ENCODE measurements at regions of chr7 and their contacts with region 1.

Region 1: GRCh38 chr7:65269150-65269856 is 104.4 kb upstream of the ZNF92 start:
- DNase-seq: peak; percentile 76
- H3K4me3 ChIP-seq: peak overlapping the region; percentile 6 to 67 (median 39)
- H3K27ac ChIP-seq: no peak overlapping the region
- H3K4me1 ChIP-seq: no peaks in the 10 kb centered on the region
- H3K27me3 ChIP-seq: peaks cover 0 to 7% of the 10 kb centered on the region in 2 experiments
- CTCF ChIP-seq: no peak
- POLR2A ChIP-seq: no peak

Region 2: DNA sequence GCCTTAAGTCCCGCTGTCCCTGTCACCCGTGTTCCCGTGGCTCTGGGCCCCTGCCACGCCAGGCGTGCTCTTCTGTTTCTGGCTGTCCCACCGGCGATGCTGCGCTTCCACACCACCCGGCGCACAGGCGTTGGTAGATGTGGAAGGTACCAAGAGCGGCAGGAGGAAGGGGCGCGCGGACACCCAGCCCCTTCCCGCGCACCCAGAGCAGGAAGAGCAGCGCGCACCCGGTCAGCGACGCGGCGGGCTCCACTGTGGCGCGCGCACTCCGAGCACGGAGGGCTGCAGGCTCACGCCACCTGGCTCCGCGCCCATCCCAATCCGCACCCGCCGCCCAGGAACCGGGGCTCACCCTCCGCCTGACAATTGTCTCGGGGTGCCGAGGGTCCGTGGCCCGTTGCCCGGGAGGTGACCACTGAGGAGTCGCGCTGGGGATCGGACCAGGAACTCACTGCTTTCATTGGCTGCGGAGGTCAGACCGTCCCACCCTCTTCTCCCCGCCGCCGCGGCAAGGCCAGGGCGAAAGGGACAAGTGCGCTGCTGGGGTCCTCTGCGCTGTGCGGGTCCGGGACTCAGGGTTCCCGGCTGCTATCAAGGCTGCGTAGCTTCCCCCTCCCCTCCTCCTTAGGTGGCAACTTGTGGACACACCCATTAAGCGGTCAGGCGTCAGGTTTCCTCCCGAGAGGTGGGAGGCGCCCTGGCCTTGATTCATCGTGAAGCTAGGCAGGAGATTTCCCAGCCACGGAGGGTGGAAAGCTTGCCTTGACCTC is 17.3 kb before region 1 on chr7:
- CTCF ChIA-PET with region 1: no interaction called
- POLR2A ChIA-PET with region 1: no interaction called
- dilution Hi-C with region 1: no loop called
- intact Hi-C with region 1: loop called (anchors 2 kb)
- DNase-seq: peak; percentile 49
- H3K4me3 ChIP-seq: peak overlapping the region; percentile 0 to 56 (median 35)
- H3K27ac ChIP-seq: no peak overlapping the region
- H3K4me1 ChIP-seq: no peaks in the 10 kb centered on the region
- H3K27me3 ChIP-seq: no peaks in the 10 kb centered on the region
- CTCF ChIP-seq: no peak
- POLR2A ChIP-seq: no peak

Measured in endothelial cell of umbilical vein (primary cell).